Transverse colon (tissue), 4 donors: ENCODE measurements at regions of chr7 and their contacts with region 1.

Region 1: DNA sequence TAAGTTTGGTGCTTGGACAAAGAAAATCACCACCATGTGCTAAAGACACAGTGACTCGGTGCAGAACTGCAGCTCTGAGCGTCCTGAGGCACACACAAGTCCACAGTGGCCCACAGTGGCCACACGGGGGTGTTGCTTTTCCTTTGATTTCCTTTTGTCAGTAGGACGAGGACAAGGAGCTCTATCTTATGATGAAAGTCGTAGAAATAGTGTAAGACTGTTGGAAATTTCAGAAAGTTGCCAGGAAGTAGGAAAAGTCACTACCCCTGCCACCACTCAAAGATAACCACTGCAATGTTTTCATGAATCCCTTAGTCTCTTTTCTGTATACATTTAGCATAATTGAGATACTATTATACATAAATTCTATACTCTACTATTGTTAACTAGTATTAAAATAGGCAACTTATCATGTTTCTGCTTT is 146.0 kb downstream of the TNS3 start:
- DNase-seq: peak; percentile 80
- H3K4me3 ChIP-seq: no peak overlapping the region
- H3K27ac ChIP-seq: no peak overlapping the region
- H3K4me1 ChIP-seq: no peaks in the 10 kb centered on the region
- H3K27me3 ChIP-seq: no peaks in the 10 kb centered on the region
- CTCF ChIP-seq: peak; percentile 71 to 82 (median 76)
- EP300 ChIP-seq: no peak
- POLR2A ChIP-seq: no peak

Region 2: GRCh38 chr7:47254081-47255006 is 181.6 kb before region 1 on chr7:
- in situ Hi-C with region 1: loop called in 1 of 4 experiments (anchors 25 kb)
- intact Hi-C with region 1: no loop called
- DNase-seq: peak; percentile 82
- H3K4me3 ChIP-seq: peak overlapping the region; percentile 39 to 62 (median 52)
- H3K27ac ChIP-seq: peak overlapping the region; percentile 85 to 87 (median 86)
- H3K4me1 ChIP-seq: peaks cover 5 to 26% (median 13%) of the 10 kb centered on the region in 4 donors
- H3K27me3 ChIP-seq: no peaks in the 10 kb centered on the region
- CTCF ChIP-seq: peak; percentile 35 to 96 (median 88)
- EP300 ChIP-seq: no peak
- POLR2A ChIP-seq: peak; percentile 26

Region 3: DNA sequence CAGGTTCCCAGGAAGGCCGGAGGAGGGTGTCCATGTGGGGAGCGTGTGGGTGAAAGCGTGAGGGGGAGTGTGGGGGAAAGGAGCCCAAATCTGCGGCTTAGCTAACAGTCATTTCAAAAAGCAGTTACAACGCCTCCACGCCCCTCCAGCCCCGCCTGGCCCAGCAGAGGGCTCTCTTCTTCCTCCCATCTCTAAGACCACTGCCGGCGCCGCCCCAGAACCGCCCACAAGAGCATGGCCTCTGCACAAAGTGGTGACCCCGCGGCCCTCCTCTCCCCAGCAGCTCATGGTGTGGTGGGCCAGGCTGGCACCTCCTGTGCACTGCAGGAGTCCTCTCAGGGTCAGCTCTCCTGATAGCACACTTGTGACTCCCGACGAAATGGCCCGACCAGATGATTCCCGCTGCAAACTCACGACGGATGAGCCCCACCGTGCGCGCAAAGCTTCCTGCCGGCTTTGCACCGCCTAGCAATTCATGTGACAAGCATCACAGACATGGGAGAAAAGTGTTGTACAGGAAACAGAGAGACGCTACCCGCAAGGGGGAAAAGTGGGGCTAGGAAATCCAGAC is 555.9 kb after region 1 on chr7:
- in situ Hi-C with region 1: no loop called
- intact Hi-C with region 1: no loop called
- DNase-seq: peak; percentile 89
- H3K4me3 ChIP-seq: peak overlapping the region; percentile 22 to 61 (median 42)
- H3K27ac ChIP-seq: peak overlapping the region; percentile 71 to 82 (median 76)
- H3K4me1 ChIP-seq: peaks cover 0 to 11% (median 5%) of the 10 kb centered on the region in 4 donors
- H3K27me3 ChIP-seq: no peaks in the 10 kb centered on the region
- CTCF ChIP-seq: peak; percentile 44 to 64 (median 54)
- EP300 ChIP-seq: no peak
- POLR2A ChIP-seq: peak; percentile 33